CD8-positive, alpha-beta T cell (primary cell): ENCODE measurements at regions of chr12 and their contacts with region 1.

Region 1: GRCh38 chr12:122399592-122400373 is 22.7 kb downstream of the CLIP1 start:
- DNase-seq: peak in 8 of 9 experiments; percentile 16 to 79 (median 54)
- ATAC-seq: peak; percentile 84
- H3K4me3 ChIP-seq: no peak overlapping the region
- H3K4me3 Mint-ChIP-seq: no peak overlapping the region
- H3K27ac ChIP-seq: no peak overlapping the region
- H3K27ac Mint-ChIP-seq: peak overlapping the region; percentile 78
- H3K4me1 ChIP-seq: peaks cover 6% of the 10 kb centered on the region
- H3K4me1 Mint-ChIP-seq: peaks cover 21% of the 10 kb centered on the region
- H3K27me3 ChIP-seq: no peaks in the 10 kb centered on the region
- H3K27me3 Mint-ChIP-seq: no peaks in the 10 kb centered on the region
- CTCF ChIP-seq: peak; percentile 74

Region 2: GRCh38 chr12:121376754-121377697 is 1022.8 kb before region 1 on chr12:
- CTCF ChIA-PET with region 1: no interaction called
- POLR2A ChIA-PET with region 1: no interaction called
- intact Hi-C with region 1: no loop called
- DNase-seq: no peak
- ATAC-seq: no peak
- H3K4me3 ChIP-seq: no peak overlapping the region
- H3K4me3 Mint-ChIP-seq: no peak overlapping the region
- H3K27ac ChIP-seq: no peak overlapping the region
- H3K27ac Mint-ChIP-seq: no peak overlapping the region
- H3K4me1 ChIP-seq: no peaks in the 10 kb centered on the region
- H3K4me1 Mint-ChIP-seq: no peaks in the 10 kb centered on the region
- H3K27me3 ChIP-seq: no peaks in the 10 kb centered on the region
- H3K27me3 Mint-ChIP-seq: peaks cover 5% of the 10 kb centered on the region
- CTCF ChIP-seq: no peak

Region 3: GRCh38 chr12:122413516-122414404 is 14.0 kb after region 1 on chr12:
- CTCF ChIA-PET with region 1: interaction called, 28 read pairs
- POLR2A ChIA-PET with region 1: no interaction called
- intact Hi-C with region 1: no loop called
- DNase-seq: no peak
- ATAC-seq: no peak
- H3K4me3 ChIP-seq: no peak overlapping the region
- H3K4me3 Mint-ChIP-seq: no peak overlapping the region
- H3K27ac ChIP-seq: peak overlapping the region in 1 of 2 experiments; percentile 44
- H3K27ac Mint-ChIP-seq: peak overlapping the region; percentile 18
- H3K4me1 ChIP-seq: no peaks in the 10 kb centered on the region
- H3K4me1 Mint-ChIP-seq: peaks cover 31% of the 10 kb centered on the region
- H3K27me3 ChIP-seq: no peaks in the 10 kb centered on the region
- H3K27me3 Mint-ChIP-seq: no peaks in the 10 kb centered on the region
- CTCF ChIP-seq: no peak

Region 4: DNA sequence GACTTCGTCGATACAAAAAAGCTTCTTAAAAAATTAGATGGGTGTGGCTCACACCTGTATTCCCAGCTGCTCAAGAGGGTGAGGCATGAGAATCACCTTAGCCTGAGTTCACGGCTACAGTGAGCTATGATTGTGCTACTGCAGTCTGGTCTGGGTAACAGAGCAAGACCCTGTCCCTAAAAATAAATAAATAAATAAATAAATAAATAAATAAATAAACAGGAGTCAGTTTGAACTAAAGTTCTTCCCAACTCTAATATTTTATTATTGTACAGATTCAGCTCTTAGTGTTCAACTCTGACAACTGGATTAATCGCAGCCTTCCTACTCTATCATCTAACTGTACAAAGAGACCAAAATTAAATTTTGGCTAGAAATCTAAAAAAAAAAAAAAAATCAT is 35.4 kb after region 1 on chr12:
- CTCF ChIA-PET with region 1: interaction called, 11 read pairs
- POLR2A ChIA-PET with region 1: no interaction called
- intact Hi-C with region 1: no loop called
- DNase-seq: no peak
- ATAC-seq: no peak
- H3K4me3 ChIP-seq: no peak overlapping the region
- H3K4me3 Mint-ChIP-seq: no peak overlapping the region
- H3K27ac ChIP-seq: no peak overlapping the region
- H3K27ac Mint-ChIP-seq: no peak overlapping the region
- H3K4me1 ChIP-seq: no peaks in the 10 kb centered on the region
- H3K4me1 Mint-ChIP-seq: no peaks in the 10 kb centered on the region
- H3K27me3 ChIP-seq: peaks cover 0 to 2% of the 10 kb centered on the region in 2 experiments
- H3K27me3 Mint-ChIP-seq: no peaks in the 10 kb centered on the region
- CTCF ChIP-seq: no peak

Region 5: GRCh38 chr12:122471324-122472226 is 71.8 kb after region 1 on chr12:
- CTCF ChIA-PET with region 1: interaction called, 264 read pairs
- POLR2A ChIA-PET with region 1: interaction called, 16 read pairs
- intact Hi-C with region 1: loop called (anchors 1 kb)
- DNase-seq: peak in 4 of 9 experiments; percentile 11 to 80 (median 54)
- ATAC-seq: peak; percentile 82
- H3K4me3 ChIP-seq: no peak overlapping the region
- H3K4me3 Mint-ChIP-seq: no peak overlapping the region
- H3K27ac ChIP-seq: no peak overlapping the region
- H3K27ac Mint-ChIP-seq: peak overlapping the region; percentile 27
- H3K4me1 ChIP-seq: no peaks in the 10 kb centered on the region
- H3K4me1 Mint-ChIP-seq: peaks cover 8% of the 10 kb centered on the region
- H3K27me3 ChIP-seq: no peaks in the 10 kb centered on the region
- H3K27me3 Mint-ChIP-seq: no peaks in the 10 kb centered on the region
- CTCF ChIP-seq: peak; percentile 88

Region 6: GRCh38 chr12:122545855-122546254 is 146.1 kb after region 1 on chr12:
- CTCF ChIA-PET with region 1: no interaction called
- POLR2A ChIA-PET with region 1: no interaction called
- intact Hi-C with region 1: no loop called
- DNase-seq: no peak
- ATAC-seq: no peak
- H3K4me3 ChIP-seq: no peak overlapping the region
- H3K4me3 Mint-ChIP-seq: no peak overlapping the region
- H3K27ac ChIP-seq: no peak overlapping the region
- H3K27ac Mint-ChIP-seq: no peak overlapping the region
- H3K4me1 ChIP-seq: no peaks in the 10 kb centered on the region
- H3K4me1 Mint-ChIP-seq: no peaks in the 10 kb centered on the region
- H3K27me3 ChIP-seq: no peaks in the 10 kb centered on the region
- H3K27me3 Mint-ChIP-seq: no peaks in the 10 kb centered on the region
- CTCF ChIP-seq: no peak